ENCODE measurements at regions of chr4 and their contacts with region 1.

Region 1: GRCh38 chr4:102344954-102345794 is at the start of gene SLC39A8:
- DNase-seq: peak; percentile 75 to 91 (median 89)
- ATAC-seq: peak; percentile 87
- H3K4me3 ChIP-seq: peak within 1 kb of the TSS; percentile 87
- H3K4me3 Mint-ChIP-seq: peak within 1 kb of the TSS; percentile 87 to 97 (median 90)
- H3K27ac ChIP-seq: peak within 1 kb of the TSS; percentile 95
- H3K27ac Mint-ChIP-seq: peak within 1 kb of the TSS; percentile 91 to 98 (median 95)
- H3K4me1 ChIP-seq: peaks cover 15 to 37% of the 10 kb centered on the region in 2 donors
- H3K4me1 Mint-ChIP-seq: peaks cover 24 to 51% (median 46%) of the 10 kb centered on the region in 7 donors
- H3K27me3 ChIP-seq: no peaks in the 10 kb centered on the region
- H3K27me3 Mint-ChIP-seq: peaks cover 0 to 7% (median 0%) of the 10 kb centered on the region in 5 donors
- total RNA-seq, gene SLC39A8: 15.1 to 99.5 (median 17.8) TPM

Region 2: DNA sequence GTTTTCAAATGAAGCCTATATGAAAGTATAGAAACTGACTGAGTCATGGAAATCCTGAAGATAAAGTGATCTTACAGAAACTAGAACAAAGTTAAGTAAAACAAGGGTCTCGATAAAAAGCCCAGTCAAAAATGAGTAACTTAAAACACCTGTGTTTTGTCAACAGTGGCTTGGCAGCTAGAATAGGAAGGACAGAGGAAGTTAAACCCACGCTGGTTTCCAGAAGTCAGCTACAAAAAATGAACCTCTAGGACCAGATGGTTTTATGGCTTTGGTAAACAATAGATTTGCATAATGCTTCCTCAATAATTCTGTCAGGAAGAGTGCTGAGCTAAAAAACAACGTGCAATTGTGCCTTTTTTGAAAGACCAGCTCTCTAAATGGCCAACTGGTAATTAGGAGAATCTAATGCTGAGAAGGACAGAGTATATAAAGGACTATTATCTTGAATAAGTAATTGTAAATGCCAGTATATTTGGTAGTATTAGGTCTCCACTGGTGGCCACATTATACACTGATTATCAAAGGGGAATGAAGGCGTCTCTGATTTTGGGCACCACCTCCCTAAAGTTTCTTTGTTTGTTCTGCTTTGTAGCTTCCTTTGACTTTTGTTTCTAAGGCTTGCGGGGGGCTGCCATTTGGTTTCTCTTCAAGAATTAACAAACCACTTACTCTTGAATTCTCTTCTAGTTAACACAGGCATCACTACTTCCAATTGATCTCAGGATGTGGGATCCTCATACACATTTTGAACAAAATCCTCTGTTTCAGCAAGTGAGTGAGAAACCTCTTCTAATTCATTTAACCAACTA is 925.6 kb before region 1 on chr4:
- CTCF ChIA-PET with region 1: no interaction called
- POLR2A ChIA-PET with region 1: no interaction called
- intact Hi-C with region 1: loop called (anchors 5 to 10 kb)
- DNase-seq: peak in 5 of 9 donors; percentile 7 to 26 (median 24)
- ATAC-seq: no peak
- H3K4me3 ChIP-seq: no peak overlapping the region
- H3K4me3 Mint-ChIP-seq: peak overlapping the region in 6 of 10 donors; percentile 1 to 70 (median 12)
- H3K27ac ChIP-seq: no peak overlapping the region
- H3K27ac Mint-ChIP-seq: peak overlapping the region in 2 of 9 donors; percentile 41 to 65
- H3K4me1 ChIP-seq: peaks cover 33 to 36% of the 10 kb centered on the region in 2 donors
- H3K4me1 Mint-ChIP-seq: peaks cover 26 to 53% (median 39%) of the 10 kb centered on the region in 7 donors
- H3K27me3 ChIP-seq: peaks cover 0 to 11% of the 10 kb centered on the region in 2 donors
- H3K27me3 Mint-ChIP-seq: peaks cover 32 to 62% (median 41%) of the 10 kb centered on the region in 5 donors

Region 3: GRCh38 chr4:102449751-102450352 is 104.7 kb after region 1 on chr4:
- CTCF ChIA-PET with region 1: no interaction called
- POLR2A ChIA-PET with region 1: no interaction called
- intact Hi-C with region 1: loop called in 1 of 2 experiments (anchors 5 kb)
- DNase-seq: peak in 7 of 9 donors; percentile 52 to 78 (median 71)
- ATAC-seq: peak; percentile 85
- H3K4me3 ChIP-seq: no peak overlapping the region
- H3K4me3 Mint-ChIP-seq: no peak overlapping the region
- H3K27ac ChIP-seq: no peak overlapping the region
- H3K27ac Mint-ChIP-seq: peak overlapping the region in 2 of 9 donors; percentile 16 to 56
- H3K4me1 ChIP-seq: no peaks in the 10 kb centered on the region
- H3K4me1 Mint-ChIP-seq: peaks cover 2 to 48% (median 9%) of the 10 kb centered on the region in 7 donors
- H3K27me3 ChIP-seq: no peaks in the 10 kb centered on the region
- H3K27me3 Mint-ChIP-seq: peaks cover 0 to 5% (median 0%) of the 10 kb centered on the region in 5 donors

Region 4: DNA sequence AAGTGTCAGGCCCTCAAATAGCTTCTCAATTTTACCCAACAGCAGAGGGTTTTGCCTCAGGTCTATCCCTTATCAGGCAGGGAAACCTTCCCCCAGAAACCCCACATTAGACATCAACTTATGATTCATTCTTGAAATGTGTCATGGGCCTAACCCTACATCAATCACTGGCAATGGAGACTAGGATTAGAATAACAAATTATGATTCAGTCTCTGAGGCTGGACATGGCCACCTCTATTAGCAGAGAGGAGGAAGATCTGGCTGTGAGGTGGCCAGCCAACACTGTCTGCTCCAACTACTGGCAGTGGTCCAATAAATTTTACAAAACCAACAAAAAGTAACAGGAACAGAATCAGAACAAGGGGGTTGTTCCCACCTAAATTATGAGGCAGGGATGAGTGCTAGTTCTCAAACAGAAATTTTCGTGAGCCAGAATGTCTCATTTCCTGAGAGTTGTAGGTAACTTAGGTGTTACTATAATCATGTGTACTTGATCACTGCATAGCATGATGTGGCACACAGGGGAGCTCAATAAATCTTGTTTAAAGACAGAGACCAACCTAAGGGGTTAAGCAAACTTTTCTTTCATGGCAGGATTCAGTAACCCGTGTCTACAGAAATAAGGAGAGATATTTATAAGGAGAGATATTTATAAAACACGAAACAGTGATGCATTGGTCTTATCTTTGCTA is 282.8 kb after region 1 on chr4:
- CTCF ChIA-PET with region 1: no interaction called
- POLR2A ChIA-PET with region 1: interaction called, 4 read pairs
- intact Hi-C with region 1: loop called (anchors 1 kb)
- DNase-seq: no peak
- ATAC-seq: no peak
- H3K4me3 ChIP-seq: no peak overlapping the region
- H3K4me3 Mint-ChIP-seq: peak overlapping the region in 4 of 10 donors; percentile 16 to 92 (median 58)
- H3K27ac ChIP-seq: no peak overlapping the region
- H3K27ac Mint-ChIP-seq: peak overlapping the region in 7 of 9 donors; percentile 15 to 100 (median 87)
- H3K4me1 ChIP-seq: peaks cover 29 to 42% of the 10 kb centered on the region in 2 donors
- H3K4me1 Mint-ChIP-seq: peaks cover 29 to 91% (median 65%) of the 10 kb centered on the region in 7 donors
- H3K27me3 ChIP-seq: no peaks in the 10 kb centered on the region
- H3K27me3 Mint-ChIP-seq: no peaks in the 10 kb centered on the region

Region 5: GRCh38 chr4:103008875-103009729 is 663.9 kb after region 1 on chr4:
- CTCF ChIA-PET with region 1: interaction called, 3 read pairs
- POLR2A ChIA-PET with region 1: no interaction called
- intact Hi-C with region 1: loop called in 1 of 2 experiments (anchors 1 kb)
- DNase-seq: peak in 7 of 9 donors; percentile 39 to 67 (median 56)
- ATAC-seq: peak; percentile 93
- H3K4me3 ChIP-seq: no peak overlapping the region
- H3K4me3 Mint-ChIP-seq: no peak overlapping the region
- H3K27ac ChIP-seq: no peak overlapping the region
- H3K27ac Mint-ChIP-seq: no peak overlapping the region
- H3K4me1 ChIP-seq: no peaks in the 10 kb centered on the region
- H3K4me1 Mint-ChIP-seq: peaks cover 0 to 3% (median 0%) of the 10 kb centered on the region in 7 donors
- H3K27me3 ChIP-seq: no peaks in the 10 kb centered on the region
- H3K27me3 Mint-ChIP-seq: peaks cover 0 to 14% (median 0%) of the 10 kb centered on the region in 5 donors

Region 6: DNA sequence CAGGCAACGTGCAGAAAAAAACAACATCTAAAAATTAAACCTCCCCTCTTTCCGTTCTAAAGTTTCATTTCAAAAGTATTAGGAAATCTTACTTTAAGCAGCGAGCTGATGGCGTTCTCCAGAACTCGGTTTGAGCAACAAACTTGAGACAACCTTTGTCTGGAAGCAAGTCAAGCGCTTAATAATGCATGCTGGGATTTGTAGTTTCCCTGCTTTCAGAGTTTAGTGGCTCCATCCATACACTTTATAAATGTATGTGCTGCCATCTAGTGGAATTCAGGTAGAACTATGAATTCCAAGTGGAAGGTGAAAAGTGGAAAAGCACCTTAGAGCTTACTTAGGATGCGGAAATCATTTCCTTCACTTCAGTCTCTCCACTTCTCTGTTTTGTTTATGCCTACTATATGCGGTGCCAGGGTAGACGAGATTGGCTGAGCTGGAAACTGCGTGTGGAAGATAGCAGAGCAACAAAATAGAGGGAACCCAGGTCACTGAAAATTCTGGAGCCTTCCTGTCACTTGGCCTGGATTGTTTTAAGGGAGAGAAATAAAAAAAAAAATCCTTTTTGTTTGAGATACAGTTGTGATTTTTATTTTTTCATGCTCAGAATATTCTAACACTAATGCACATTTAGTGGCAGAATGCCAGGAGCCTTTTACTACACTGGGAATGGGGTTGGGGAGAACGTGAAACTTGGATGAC is 754.7 kb after region 1 on chr4 and contains the start of gene BDH2:
- CTCF ChIA-PET with region 1: no interaction called
- POLR2A ChIA-PET with region 1: no interaction called
- intact Hi-C with region 1: loop called (anchors 1 to 2 kb)
- DNase-seq: peak in 7 of 9 donors; percentile 72 to 86 (median 83)
- ATAC-seq: peak; percentile 100
- H3K4me3 ChIP-seq: peak within 1 kb of the TSS; percentile 62
- H3K4me3 Mint-ChIP-seq: peak within 1 kb of the TSS; percentile 88 to 100 (median 94)
- H3K27ac ChIP-seq: peak within 1 kb of the TSS; percentile 69
- H3K27ac Mint-ChIP-seq: peak within 1 kb of the TSS; percentile 81 to 95 (median 92)
- H3K4me1 ChIP-seq: peaks cover 4 to 11% of the 10 kb centered on the region in 2 donors
- H3K4me1 Mint-ChIP-seq: peaks cover 22 to 45% (median 34%) of the 10 kb centered on the region in 7 donors
- H3K27me3 ChIP-seq: no peaks in the 10 kb centered on the region
- H3K27me3 Mint-ChIP-seq: no peaks in the 10 kb centered on the region
- total RNA-seq, gene BDH2: 8.4 to 21.9 (median 18.5) TPM

Measured in naive thymus-derived CD4-positive, alpha-beta T cell (primary cell).